GM12878 (cell line): ENCODE measurements at regions of chr22 and their contacts with region 1.

Region 1: DNA sequence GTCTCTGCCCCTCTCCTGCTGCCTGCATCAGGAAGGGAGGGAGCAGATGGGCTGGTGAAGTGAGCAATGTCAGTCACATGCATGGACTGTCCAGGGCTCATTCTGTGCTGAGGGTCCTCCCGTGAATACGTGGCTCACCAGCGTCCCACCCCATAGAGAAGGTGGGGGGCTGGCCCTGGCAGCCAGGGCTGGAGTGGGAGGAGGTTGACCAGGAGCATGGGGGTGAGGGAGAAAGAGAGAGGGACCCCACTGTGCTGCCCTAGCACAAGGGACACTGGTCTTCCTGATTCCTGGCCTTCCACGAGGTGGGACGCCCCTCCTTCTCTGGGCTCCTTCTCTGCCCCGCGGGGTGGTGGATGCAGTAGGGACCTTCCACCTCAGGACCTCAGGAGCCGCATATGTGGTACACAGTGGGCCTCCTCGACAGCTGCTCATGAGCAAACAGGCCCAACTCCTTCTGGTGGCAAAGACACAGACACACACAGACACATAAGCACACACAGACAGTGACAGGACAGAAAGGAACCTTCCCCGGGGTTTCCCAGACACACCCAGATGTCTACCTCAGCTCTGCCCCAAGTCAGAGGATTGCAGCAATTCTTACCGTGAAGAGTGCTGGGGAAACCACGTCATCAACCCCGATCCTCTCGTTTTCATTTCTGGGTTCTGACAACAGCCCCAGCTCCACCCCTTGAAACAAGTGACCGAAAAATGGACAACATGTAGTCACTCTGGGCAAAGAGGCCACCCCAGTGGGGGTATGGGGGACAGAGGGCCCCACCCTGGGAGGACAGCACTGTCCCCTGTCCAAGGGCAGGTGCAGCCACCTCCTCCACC is 3.6 kb upstream of the APOBEC3A start:
- DNase-seq: peak; percentile 85
- ATAC-seq: peak; percentile 94
- H3K4me3 ChIP-seq: peak overlapping the region; percentile 48
- H3K27ac ChIP-seq: peak overlapping the region; percentile 78
- H3K4me1 ChIP-seq: peaks cover 24% of the 10 kb centered on the region
- H3K27me3 ChIP-seq: no peaks in the 10 kb centered on the region
- CTCF ChIP-seq: no peak
- EP300 ChIP-seq: peak in 1 of 2 experiments; percentile 19; a peak in 1 of 4 replicates
- POLR2A ChIP-seq: peak; percentile 77
- RAD21 ChIP-seq: no peak

Region 2: DNA sequence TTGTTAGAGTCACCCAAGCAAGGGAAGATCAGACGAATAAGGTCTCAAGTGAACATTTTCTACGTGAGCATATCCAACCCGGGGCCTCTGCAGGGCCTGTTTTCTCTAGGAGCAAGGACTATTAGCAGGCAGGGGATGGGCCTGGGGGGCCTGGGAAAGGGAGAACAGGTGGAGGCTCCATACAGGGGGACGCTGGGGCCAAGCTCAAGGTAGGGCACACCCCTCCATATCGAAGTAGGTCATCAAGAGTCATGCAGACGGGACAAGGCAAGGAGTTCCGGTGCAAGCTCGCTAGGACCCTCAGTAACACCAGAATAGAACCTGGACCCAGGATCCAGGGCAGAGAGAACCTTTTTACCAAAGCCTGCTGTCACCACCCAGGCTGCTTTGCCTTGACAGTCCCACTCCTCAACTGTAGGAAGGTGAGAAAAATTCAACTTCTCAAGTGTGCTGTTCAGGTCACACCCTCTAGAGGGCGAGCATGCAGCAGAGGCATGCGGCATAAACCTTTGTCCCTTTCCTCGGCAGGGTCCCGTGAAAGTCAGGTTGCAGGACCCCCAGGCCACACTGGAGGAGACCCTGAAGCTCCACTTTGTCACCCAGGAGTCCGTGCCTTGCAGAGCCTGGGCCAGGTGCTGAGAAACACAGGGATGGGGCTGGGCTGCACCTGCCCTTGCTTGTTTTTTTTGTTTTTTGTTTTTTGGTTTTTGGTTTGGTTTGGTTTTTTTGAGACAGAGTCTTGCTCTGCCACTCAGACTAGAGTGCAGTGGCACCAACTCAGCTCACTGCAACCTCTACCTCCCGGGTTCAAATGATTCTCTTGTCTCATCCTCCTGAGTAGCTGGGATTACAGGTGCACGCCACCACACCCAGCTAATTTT is 19.7 kb after region 1 on chr22:
- CTCF ChIA-PET with region 1: interaction called, 10 read pairs
- POLR2A ChIA-PET with region 1: interaction called, 3 read pairs
- RAD21 ChIA-PET with region 1: no interaction called
- SMC1A ChIA-PET with region 1: interaction called, 3 read pairs
- in situ Hi-C with region 1: no loop called
- intact Hi-C with region 1: no loop called
- DNase-seq: no peak
- ATAC-seq: peak; percentile 94
- H3K4me3 ChIP-seq: no peak overlapping the region
- H3K27ac ChIP-seq: no peak overlapping the region
- H3K4me1 ChIP-seq: no peaks in the 10 kb centered on the region
- H3K27me3 ChIP-seq: no peaks in the 10 kb centered on the region; a peak in 1 of 4 replicates
- CTCF ChIP-seq: peak; percentile 91 to 96 (median 96)
- EP300 ChIP-seq: no peak
- POLR2A ChIP-seq: no peak
- RAD21 ChIP-seq: peak; percentile 90

Region 3: GRCh38 chr22:40768206-40768605 is 1814.4 kb after region 1 on chr22:
- CTCF ChIA-PET with region 1: no interaction called
- POLR2A ChIA-PET with region 1: no interaction called
- RAD21 ChIA-PET with region 1: no interaction called
- SMC1A ChIA-PET with region 1: no interaction called
- in situ Hi-C with region 1: no loop called
- intact Hi-C with region 1: no loop called
- DNase-seq: no peak
- ATAC-seq: no peak
- H3K4me3 ChIP-seq: no peak overlapping the region
- H3K27ac ChIP-seq: no peak overlapping the region
- H3K4me1 ChIP-seq: peaks cover 16% of the 10 kb centered on the region; the same call in 1 of the 2 replicates
- H3K27me3 ChIP-seq: no peaks in the 10 kb centered on the region
- CTCF ChIP-seq: no peak
- EP300 ChIP-seq: no peak
- POLR2A ChIP-seq: no peak
- RAD21 ChIP-seq: no peak